HepG2 (cell line): ENCODE measurements at regions of chr16 and their contacts with region 1.

Region 1: GRCh38 chr16:57185944-57186871 is at the starts of genes PSME3IP1 and RSPRY1:
- DNase-seq: peak; percentile 100
- ATAC-seq: peak; percentile 94
- H3K4me3 ChIP-seq: peak within 1 kb of the TSS; percentile 93 to 99 (median 94)
- H3K27ac ChIP-seq: peak within 1 kb of the TSS; percentile 82
- H3K4me1 ChIP-seq: peaks cover 51% of the 10 kb centered on the region
- H3K27me3 ChIP-seq: no peaks in the 10 kb centered on the region; a peak in 2 of 5 replicates
- CTCF ChIP-seq: no peak; the same call in 1 of the 2 replicates
- EP300 ChIP-seq: peak in 1 of 2 experiments; percentile 20; a peak in 1 of 4 replicates
- POLR2A ChIP-seq: peak; percentile 75 to 94
- RAD21 ChIP-seq: 0 out of 2 replicates have a peak, but pooled peaks have one; percentile 11
- total RNA-seq, gene PSME3IP1: 99.8 and 104 TPM in 2 replicates
- total RNA-seq, gene RSPRY1: 51.7 and 53.4 TPM in 2 replicates

Region 2: DNA sequence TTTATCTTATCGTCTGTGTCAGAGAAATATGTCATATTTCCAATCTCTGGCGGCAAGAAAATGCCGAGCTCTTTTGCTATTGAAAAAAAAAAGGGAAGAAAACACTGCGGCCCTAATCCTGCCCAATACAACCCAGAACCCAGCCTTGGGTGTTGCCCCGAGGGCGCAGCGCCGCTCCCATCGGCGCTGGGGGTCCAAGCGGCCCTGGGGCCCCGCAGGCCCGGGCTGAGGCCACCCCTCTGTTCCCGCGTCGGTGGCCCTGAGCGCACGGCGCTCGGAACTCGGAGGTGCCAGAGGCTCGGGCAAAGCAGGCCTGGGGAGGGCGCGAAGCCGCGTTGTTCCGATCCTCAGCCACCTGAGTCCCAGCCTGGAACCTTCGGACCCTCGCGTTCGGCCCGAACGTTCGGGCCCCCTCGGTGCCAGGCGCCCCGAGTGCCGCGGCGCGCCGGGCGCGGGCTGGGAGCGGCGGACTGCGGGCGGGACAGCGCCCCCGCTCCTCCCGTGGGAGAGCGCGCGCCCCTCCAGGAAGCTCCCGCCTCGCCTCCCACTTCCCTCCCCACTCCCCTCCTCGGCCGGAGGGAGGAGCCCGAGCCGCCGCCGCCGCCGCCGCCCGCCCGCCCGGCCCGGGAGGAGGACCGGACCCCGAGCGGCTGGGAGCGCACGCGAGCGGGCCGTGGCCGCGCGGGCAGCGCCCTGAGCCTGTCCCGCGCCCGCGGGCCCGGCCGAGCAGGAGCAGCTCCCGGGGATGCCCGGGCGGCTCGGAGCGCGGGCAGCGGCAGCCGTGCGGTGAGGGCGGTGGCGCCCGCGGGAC is 94.0 kb before region 1 on chr16 and contains the start of gene CPNE2:
- CTCF ChIA-PET with region 1: no interaction called
- POLR2A ChIA-PET with region 1: interaction called, 20 read pairs
- in situ Hi-C with region 1: no loop called
- intact Hi-C with region 1: no loop called
- DNase-seq: no peak
- ATAC-seq: peak; percentile 63
- H3K4me3 ChIP-seq: peak within 1 kb of the TSS; percentile 72 to 84 (median 83)
- H3K27ac ChIP-seq: no peak within 1 kb of the TSS
- H3K4me1 ChIP-seq: peaks cover 23% of the 10 kb centered on the region
- H3K27me3 ChIP-seq: peaks cover 2 to 24% of the 10 kb centered on the region in 2 experiments; a peak in 4 of 5 replicates
- CTCF ChIP-seq: peak; percentile 20; the same call in 1 of the 2 replicates
- EP300 ChIP-seq: no peak
- POLR2A ChIP-seq: no peak; a peak in 1 of 4 replicates
- RAD21 ChIP-seq: no peak
- total RNA-seq, gene CPNE2: 8.0 and 10.6 TPM in 2 replicates

Region 3: DNA sequence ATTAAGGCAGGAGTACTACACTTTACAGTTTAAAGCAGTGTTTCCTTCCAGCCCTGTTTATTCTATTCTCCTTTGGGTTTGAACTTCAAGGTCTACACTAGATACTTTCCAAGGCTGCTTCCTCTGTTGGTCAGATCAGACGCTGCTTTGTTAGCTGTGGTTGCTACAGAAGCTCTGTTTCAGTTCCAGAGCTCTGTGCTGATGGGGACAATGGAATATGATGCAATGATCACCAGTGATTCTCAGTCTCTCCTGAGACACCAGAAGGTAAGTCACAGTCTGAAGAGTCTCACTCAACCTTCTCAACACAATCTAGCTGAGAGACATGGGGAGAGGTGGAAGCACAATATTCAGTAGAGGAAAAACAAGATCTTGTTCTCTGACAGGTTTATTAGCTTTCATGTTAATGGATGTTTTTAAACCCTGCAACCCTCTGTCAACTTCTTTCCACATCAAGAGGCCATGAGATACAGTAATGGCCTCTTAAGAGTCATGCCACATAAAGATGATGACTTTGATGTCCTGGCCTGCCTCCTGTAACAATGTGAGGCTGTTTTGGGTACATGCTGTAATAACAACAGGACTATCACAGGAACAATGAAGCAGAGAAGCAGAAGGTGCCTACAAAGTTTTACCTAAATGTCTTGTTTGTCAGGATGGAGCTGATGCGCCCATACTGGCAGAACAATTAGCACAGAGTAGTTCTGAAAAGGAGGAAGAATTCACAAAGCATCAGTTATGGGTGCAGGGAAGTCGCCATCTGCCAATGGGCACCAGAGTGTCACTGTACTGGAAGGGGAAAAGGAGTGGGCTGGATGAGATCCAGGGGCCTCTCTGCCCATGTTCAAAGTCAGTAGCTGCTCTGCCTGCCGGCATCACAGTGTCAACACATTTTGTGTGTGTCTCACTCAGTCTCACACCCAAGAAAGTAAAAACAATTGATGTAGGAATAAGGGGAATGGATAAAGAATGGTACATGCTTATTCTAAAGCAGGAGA is 33.8 kb before region 1 on chr16:
- CTCF ChIA-PET with region 1: no interaction called
- POLR2A ChIA-PET with region 1: interaction called, 10 read pairs
- in situ Hi-C with region 1: no loop called
- intact Hi-C with region 1: no loop called
- DNase-seq: peak; percentile 27
- ATAC-seq: peak; percentile 21; the same call in 1 of the 3 replicates
- H3K4me3 ChIP-seq: no peak overlapping the region
- H3K27ac ChIP-seq: peak overlapping the region; percentile 4
- H3K4me1 ChIP-seq: peaks cover 27% of the 10 kb centered on the region
- H3K27me3 ChIP-seq: no peaks in the 10 kb centered on the region
- CTCF ChIP-seq: no peak
- EP300 ChIP-seq: no peak
- POLR2A ChIP-seq: no peak
- RAD21 ChIP-seq: no peak

Region 4: DNA sequence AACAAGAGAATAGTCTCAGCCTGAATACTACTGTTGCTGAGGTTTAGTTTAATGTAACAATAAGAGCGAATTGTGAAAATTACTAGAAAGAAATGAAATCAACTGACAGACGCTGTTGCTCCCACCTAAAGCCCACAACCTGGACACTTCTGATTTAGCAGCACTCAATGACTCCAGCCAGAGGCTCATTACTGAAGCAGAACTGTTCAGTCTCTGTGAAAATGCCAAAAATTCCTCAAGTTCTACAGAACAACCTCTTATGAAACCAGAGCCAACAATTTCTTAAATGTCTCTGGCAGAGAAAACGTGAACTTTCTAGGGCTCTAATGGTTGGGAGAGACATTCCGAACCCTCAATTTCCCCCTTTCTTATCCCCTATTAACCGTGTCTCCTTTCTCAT is 10.3 kb before region 1 on chr16:
- CTCF ChIA-PET with region 1: no interaction called
- POLR2A ChIA-PET with region 1: interaction called, 12 read pairs
- in situ Hi-C with region 1: no loop called
- intact Hi-C with region 1: no loop called
- DNase-seq: no peak
- ATAC-seq: no peak
- H3K4me3 ChIP-seq: no peak overlapping the region
- H3K27ac ChIP-seq: no peak overlapping the region
- H3K4me1 ChIP-seq: peaks cover 31% of the 10 kb centered on the region
- H3K27me3 ChIP-seq: no peaks in the 10 kb centered on the region
- CTCF ChIP-seq: no peak
- EP300 ChIP-seq: no peak
- POLR2A ChIP-seq: no peak
- RAD21 ChIP-seq: no peak

Region 5: GRCh38 chr16:57244767-57245471 is 58.7 kb after region 1 on chr16 and contains the start of gene ARL2BP:
- CTCF ChIA-PET with region 1: no interaction called
- POLR2A ChIA-PET with region 1: interaction called, 18 read pairs
- in situ Hi-C with region 1: no loop called
- intact Hi-C with region 1: loop called (anchors 1 kb)
- DNase-seq: peak; percentile 96
- ATAC-seq: peak; percentile 96
- H3K4me3 ChIP-seq: peak within 1 kb of the TSS; percentile 77 to 89 (median 81)
- H3K27ac ChIP-seq: peak within 1 kb of the TSS; percentile 91
- H3K4me1 ChIP-seq: peaks cover 40% of the 10 kb centered on the region
- H3K27me3 ChIP-seq: no peaks in the 10 kb centered on the region
- CTCF ChIP-seq: no peak; the same call in none of the 2 replicates
- EP300 ChIP-seq: 0 out of 4 replicates have a peak, but pooled peaks of 1 of the 2 experiments have one; percentile 7
- POLR2A ChIP-seq: peak; percentile 82 to 84
- RAD21 ChIP-seq: peak; percentile 79
- total RNA-seq, gene ARL2BP: 67.6 and 97.1 TPM in 2 replicates

Region 6: DNA sequence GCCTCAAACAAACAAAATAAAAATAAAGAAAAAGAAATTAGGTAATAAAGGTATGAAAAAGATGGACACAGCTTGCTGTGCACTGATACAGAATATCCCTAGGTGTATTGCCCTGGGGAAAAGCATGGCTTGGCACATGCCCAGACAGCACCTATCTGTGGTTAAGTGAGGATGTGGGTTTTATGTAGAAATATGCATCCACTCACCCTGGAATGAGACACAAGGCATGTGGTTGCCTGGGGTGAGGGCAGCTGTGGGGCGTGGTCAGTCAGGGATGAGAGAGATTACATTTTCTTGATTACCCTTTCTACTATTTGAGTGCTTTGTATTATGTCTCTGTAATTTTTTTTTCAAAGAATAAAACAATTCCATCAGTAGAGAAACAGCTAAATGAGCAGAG is 91.4 kb after region 1 on chr16:
- CTCF ChIA-PET with region 1: no interaction called
- POLR2A ChIA-PET with region 1: interaction called, 23 read pairs
- in situ Hi-C with region 1: loop called (anchors 5 kb)
- intact Hi-C with region 1: loop called (anchors 5 kb)
- DNase-seq: no peak
- ATAC-seq: no peak
- H3K4me3 ChIP-seq: no peak overlapping the region
- H3K27ac ChIP-seq: no peak overlapping the region
- H3K4me1 ChIP-seq: peaks cover 100% of the 10 kb centered on the region
- H3K27me3 ChIP-seq: no peaks in the 10 kb centered on the region
- CTCF ChIP-seq: no peak
- EP300 ChIP-seq: no peak
- POLR2A ChIP-seq: no peak
- RAD21 ChIP-seq: no peak

Region 7: DNA sequence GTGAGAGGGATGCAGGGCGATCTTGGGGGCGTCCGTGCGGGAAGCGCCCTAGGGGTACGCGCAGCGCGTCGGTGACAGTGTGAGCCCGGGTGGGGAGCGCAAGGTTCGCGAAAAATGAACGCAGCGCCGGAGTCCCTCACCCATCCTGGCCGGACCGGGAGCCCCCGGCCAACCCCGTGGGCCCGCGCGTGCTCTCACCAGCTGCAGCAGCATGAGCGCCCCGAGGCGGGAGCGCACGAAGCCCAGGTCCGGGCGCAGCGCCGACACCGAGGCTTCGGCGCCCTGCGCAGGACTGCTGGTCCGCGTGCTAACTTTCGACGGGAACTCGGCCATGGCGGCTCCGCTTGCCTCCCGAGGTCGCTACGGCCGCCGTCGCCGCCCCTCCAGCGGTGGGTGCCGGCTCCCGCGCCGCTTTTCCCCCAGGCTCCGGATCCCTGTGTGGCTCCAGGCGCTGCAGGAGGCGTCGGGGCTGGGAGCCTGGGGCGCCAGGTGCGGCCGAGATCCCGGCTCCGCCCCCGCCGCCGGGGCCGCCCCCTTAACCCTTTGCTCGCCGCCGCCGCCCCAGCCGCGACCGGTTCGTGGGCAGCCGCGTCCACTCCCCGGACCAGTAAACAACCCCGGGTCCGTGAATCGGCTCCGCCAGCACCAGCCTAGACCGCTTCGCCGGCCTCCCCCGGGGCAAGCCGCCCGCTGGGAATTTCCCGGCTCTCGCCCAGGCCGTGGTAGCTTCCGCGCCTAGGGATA is 98.2 kb after region 1 on chr16 and contains the start of gene PLLP:
- CTCF ChIA-PET with region 1: no interaction called
- POLR2A ChIA-PET with region 1: interaction called, 23 read pairs
- in situ Hi-C with region 1: loop called (anchors 5 kb)
- intact Hi-C with region 1: loop called (anchors 5 kb)
- DNase-seq: no peak
- ATAC-seq: peak; percentile 68
- H3K4me3 ChIP-seq: peak within 1 kb of the TSS; percentile 75 to 91 (median 78)
- H3K27ac ChIP-seq: peak within 1 kb of the TSS; percentile 76
- H3K4me1 ChIP-seq: peaks cover 86% of the 10 kb centered on the region
- H3K27me3 ChIP-seq: peaks cover 1 to 6% of the 10 kb centered on the region in 2 experiments; a peak in 1 of 5 replicates
- CTCF ChIP-seq: no peak; the same call in 1 of the 2 replicates
- EP300 ChIP-seq: no peak
- POLR2A ChIP-seq: peak; percentile 52 to 91; a peak in 3 of 4 replicates
- RAD21 ChIP-seq: peak; percentile 61
- total RNA-seq, gene PLLP: 39.5 and 60.6 TPM in 2 replicates

Region 8: GRCh38 chr16:57513371-57514102 is 327.3 kb after region 1 on chr16:
- CTCF ChIA-PET with region 1: no interaction called
- POLR2A ChIA-PET with region 1: no interaction called
- in situ Hi-C with region 1: no loop called
- intact Hi-C with region 1: no loop called
- DNase-seq: no peak
- ATAC-seq: no peak
- H3K4me3 ChIP-seq: no peak overlapping the region
- H3K27ac ChIP-seq: no peak overlapping the region
- H3K4me1 ChIP-seq: peaks cover 32% of the 10 kb centered on the region
- H3K27me3 ChIP-seq: peaks cover 2 to 9% of the 10 kb centered on the region in 2 experiments; a peak in 3 of 5 replicates
- CTCF ChIP-seq: no peak
- EP300 ChIP-seq: no peak
- POLR2A ChIP-seq: no peak
- RAD21 ChIP-seq: no peak